ENCODE measurements at regions of chr12 and their contacts with region 1.

Region 1: GRCh38 chr12:69738351-69739286 is at the start of gene RAB3IP:
- DNase-seq: peak; percentile 94
- ATAC-seq: peak; percentile 93
- H3K4me3 ChIP-seq: peak within 1 kb of the TSS; percentile 63 to 77 (median 70)
- H3K4me3 Mint-ChIP-seq: peak within 1 kb of the TSS; percentile 87
- H3K27ac ChIP-seq: peak within 1 kb of the TSS; percentile 57 to 91
- H3K27ac Mint-ChIP-seq: peak within 1 kb of the TSS; percentile 76
- H3K4me1 ChIP-seq: peaks cover 11 to 15% of the 10 kb centered on the region in 2 donors
- H3K4me1 Mint-ChIP-seq: peaks cover 11% of the 10 kb centered on the region
- H3K27me3 ChIP-seq: peaks cover 0 to 6% (median 0%) of the 10 kb centered on the region in 4 experiments
- H3K27me3 Mint-ChIP-seq: peaks cover 12% of the 10 kb centered on the region
- CTCF ChIP-seq: peak; percentile 79
- total RNA-seq, gene RAB3IP: 37.9 and 38.4 TPM in 2 replicates

Region 2: GRCh38 chr12:67991158-67991557 is 1747.5 kb before region 1 on chr12:
- CTCF ChIA-PET with region 1: no interaction called
- POLR2A ChIA-PET with region 1: no interaction called
- intact Hi-C with region 1: loop called (anchors 5 kb)
- DNase-seq: peak; percentile 79
- ATAC-seq: peak; percentile 82
- H3K4me3 ChIP-seq: peak overlapping the region in 4 of 5 experiments; percentile 7 to 71 (median 38)
- H3K4me3 Mint-ChIP-seq: peak overlapping the region; percentile 74
- H3K27ac ChIP-seq: peak overlapping the region; percentile 95 to 98
- H3K27ac Mint-ChIP-seq: peak overlapping the region; percentile 91
- H3K4me1 ChIP-seq: peaks cover 54 to 71% of the 10 kb centered on the region in 2 donors
- H3K4me1 Mint-ChIP-seq: peaks cover 67% of the 10 kb centered on the region
- H3K27me3 ChIP-seq: no peaks in the 10 kb centered on the region
- H3K27me3 Mint-ChIP-seq: no peaks in the 10 kb centered on the region
- CTCF ChIP-seq: no peak

Region 3: GRCh38 chr12:68451261-68452077 is 1287.2 kb before region 1 on chr12:
- CTCF ChIA-PET with region 1: no interaction called
- POLR2A ChIA-PET with region 1: no interaction called
- intact Hi-C with region 1: no loop called
- DNase-seq: peak; percentile 46
- ATAC-seq: peak; percentile 64
- H3K4me3 ChIP-seq: peak overlapping the region; percentile 9 to 53 (median 41)
- H3K4me3 Mint-ChIP-seq: peak overlapping the region; percentile 83
- H3K27ac ChIP-seq: peak overlapping the region; percentile 72 to 73
- H3K27ac Mint-ChIP-seq: peak overlapping the region; percentile 90
- H3K4me1 ChIP-seq: peaks cover 78 to 88% of the 10 kb centered on the region in 2 donors
- H3K4me1 Mint-ChIP-seq: peaks cover 91% of the 10 kb centered on the region
- H3K27me3 ChIP-seq: no peaks in the 10 kb centered on the region
- H3K27me3 Mint-ChIP-seq: no peaks in the 10 kb centered on the region
- CTCF ChIP-seq: no peak

Region 4: DNA sequence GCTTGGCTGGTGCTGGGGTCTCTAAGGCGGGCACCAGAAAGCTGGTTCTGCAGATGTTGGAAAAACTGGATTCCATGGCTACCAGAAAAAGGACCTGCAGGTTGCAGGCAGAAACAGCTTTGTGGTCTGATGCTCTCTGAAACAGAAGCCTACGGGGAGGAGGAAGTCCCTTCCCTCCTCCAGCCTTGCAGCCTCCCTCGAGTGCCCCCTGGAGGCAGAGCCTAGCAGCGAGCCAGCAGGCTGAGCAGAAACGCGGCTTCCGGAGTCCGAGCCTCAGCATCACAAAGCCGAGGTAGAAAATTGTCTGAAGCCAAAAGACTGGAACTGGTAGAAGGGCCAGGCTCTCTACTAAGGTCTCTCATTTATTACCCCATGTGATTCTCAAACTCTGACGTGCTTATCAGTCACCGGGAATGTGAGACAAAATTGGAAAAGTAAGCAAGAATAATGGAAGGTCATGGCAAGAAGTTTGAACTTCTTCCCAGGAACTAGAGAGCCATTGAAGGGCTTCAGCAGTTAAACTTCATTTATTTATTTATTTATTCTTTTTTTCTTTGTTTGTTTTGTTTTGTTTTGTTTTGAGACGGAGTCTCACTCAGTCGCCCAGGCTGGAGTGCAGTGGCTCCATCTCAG is 581.5 kb before region 1 on chr12:
- CTCF ChIA-PET with region 1: no interaction called
- POLR2A ChIA-PET with region 1: no interaction called
- intact Hi-C with region 1: loop called (anchors 2 kb)
- DNase-seq: peak; percentile 88
- ATAC-seq: peak; percentile 100
- H3K4me3 ChIP-seq: peak overlapping the region in 2 of 5 experiments; percentile 17 to 35
- H3K4me3 Mint-ChIP-seq: peak overlapping the region; percentile 69
- H3K27ac ChIP-seq: no peak overlapping the region
- H3K27ac Mint-ChIP-seq: peak overlapping the region; percentile 64
- H3K4me1 ChIP-seq: peaks cover 3 to 7% of the 10 kb centered on the region in 2 donors
- H3K4me1 Mint-ChIP-seq: peaks cover 12% of the 10 kb centered on the region
- H3K27me3 ChIP-seq: no peaks in the 10 kb centered on the region
- H3K27me3 Mint-ChIP-seq: no peaks in the 10 kb centered on the region
- CTCF ChIP-seq: peak; percentile 96

Region 5: GRCh38 chr12:69585189-69586062 is 153.2 kb before region 1 on chr12 and contains the start of gene CCT2:
- CTCF ChIA-PET with region 1: no interaction called
- POLR2A ChIA-PET with region 1: no interaction called
- intact Hi-C with region 1: loop called (anchors 1 kb)
- DNase-seq: peak; percentile 98
- ATAC-seq: peak; percentile 93
- H3K4me3 ChIP-seq: peak within 1 kb of the TSS; percentile 83 to 96 (median 90)
- H3K4me3 Mint-ChIP-seq: peak within 1 kb of the TSS; percentile 97
- H3K27ac ChIP-seq: peak within 1 kb of the TSS; percentile 91 to 97
- H3K27ac Mint-ChIP-seq: peak within 1 kb of the TSS; percentile 96
- H3K4me1 ChIP-seq: peaks cover 6 to 11% of the 10 kb centered on the region in 2 donors
- H3K4me1 Mint-ChIP-seq: peaks cover 12% of the 10 kb centered on the region
- H3K27me3 ChIP-seq: no peaks in the 10 kb centered on the region
- H3K27me3 Mint-ChIP-seq: no peaks in the 10 kb centered on the region
- CTCF ChIP-seq: peak; percentile 60
- total RNA-seq, gene CCT2: 125 TPM in 2 replicates

Region 6: DNA sequence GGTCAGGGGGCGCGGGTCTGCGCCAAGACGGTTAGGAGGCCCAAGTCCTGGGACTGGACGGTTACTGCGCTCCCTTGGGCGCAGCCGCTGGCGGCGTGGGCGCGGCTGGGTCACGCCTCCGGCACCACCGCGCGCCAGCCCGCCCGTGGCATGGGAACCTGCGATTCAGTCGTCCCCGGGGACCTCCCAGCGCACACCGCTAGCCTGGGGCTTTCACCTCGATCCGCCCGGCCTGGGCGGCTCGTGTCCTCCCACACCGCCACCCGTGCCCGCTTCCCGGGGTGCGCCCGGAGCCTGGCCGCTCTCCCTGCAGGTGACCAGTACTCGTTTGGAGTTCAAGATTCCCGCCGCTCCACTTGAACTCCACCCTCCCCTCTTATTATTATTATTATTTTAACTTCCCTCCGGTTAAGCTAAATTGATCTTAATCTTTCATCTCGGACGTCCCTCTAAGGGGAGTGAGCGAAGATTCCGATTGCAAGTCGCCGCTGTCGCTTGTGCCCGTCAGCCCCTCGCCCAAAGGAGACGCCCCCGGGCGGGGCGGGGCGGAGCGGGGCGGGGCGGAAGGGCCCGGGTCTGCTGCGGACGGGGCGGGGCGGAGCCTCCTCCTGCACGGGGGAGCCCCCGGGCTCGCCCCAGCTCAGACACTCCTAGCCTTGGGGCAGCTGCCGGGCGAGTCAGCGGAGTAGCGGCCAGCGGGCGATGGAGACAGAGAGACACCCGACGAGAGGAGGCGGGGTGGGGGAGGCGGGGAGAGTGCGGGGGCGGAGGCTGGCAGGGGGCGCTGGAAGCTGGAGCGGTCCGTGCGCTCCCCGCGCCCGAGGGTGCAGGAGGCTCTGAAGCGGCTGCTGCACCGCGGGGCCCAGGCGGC is 627.3 kb after region 1 on chr12 and contains the start of gene KCNMB4:
- CTCF ChIA-PET with region 1: no interaction called
- POLR2A ChIA-PET with region 1: no interaction called
- intact Hi-C with region 1: loop called (anchors 5 kb)
- DNase-seq: peak; percentile 82
- ATAC-seq: peak; percentile 87
- H3K4me3 ChIP-seq: peak within 1 kb of the TSS; percentile 72 to 93 (median 76)
- H3K4me3 Mint-ChIP-seq: peak within 1 kb of the TSS; percentile 96
- H3K27ac ChIP-seq: peak within 1 kb of the TSS; percentile 15 to 41
- H3K27ac Mint-ChIP-seq: peak within 1 kb of the TSS; percentile 70
- H3K4me1 ChIP-seq: peaks cover 17 to 18% of the 10 kb centered on the region in 2 donors
- H3K4me1 Mint-ChIP-seq: peaks cover 18% of the 10 kb centered on the region
- H3K27me3 ChIP-seq: peaks cover 0 to 13% (median 9%) of the 10 kb centered on the region in 4 experiments
- H3K27me3 Mint-ChIP-seq: peaks cover 6% of the 10 kb centered on the region
- CTCF ChIP-seq: no peak
- total RNA-seq, gene KCNMB4: 0.67 and 0.80 TPM in 2 replicates

Region 7: GRCh38 chr12:70449074-70449761 is 710.6 kb after region 1 on chr12:
- CTCF ChIA-PET with region 1: no interaction called
- POLR2A ChIA-PET with region 1: no interaction called
- intact Hi-C with region 1: no loop called
- DNase-seq: no peak
- ATAC-seq: no peak
- H3K4me3 ChIP-seq: no peak overlapping the region
- H3K4me3 Mint-ChIP-seq: no peak overlapping the region
- H3K27ac ChIP-seq: no peak overlapping the region
- H3K27ac Mint-ChIP-seq: no peak overlapping the region
- H3K4me1 ChIP-seq: no peaks in the 10 kb centered on the region
- H3K4me1 Mint-ChIP-seq: no peaks in the 10 kb centered on the region
- H3K27me3 ChIP-seq: no peaks in the 10 kb centered on the region
- H3K27me3 Mint-ChIP-seq: no peaks in the 10 kb centered on the region
- CTCF ChIP-seq: no peak

Measured in B cell (primary cell).